ENCODE measurements at regions of chr4 and their contacts with region 1.

Region 1: GRCh38 chr4:7802093-7802726 is 137.5 kb downstream of the AFAP1 start:
- DNase-seq: peak; percentile 86
- H3K4me3 Mint-ChIP-seq: no peak overlapping the region
- H3K27ac Mint-ChIP-seq: no peak overlapping the region
- H3K4me1 Mint-ChIP-seq: peaks cover 11% of the 10 kb centered on the region
- H3K27me3 Mint-ChIP-seq: no peaks in the 10 kb centered on the region

Region 2: GRCh38 chr4:7607156-7607910 is 194.9 kb before region 1 on chr4:
- CTCF ChIA-PET with region 1: no interaction called
- POLR2A ChIA-PET with region 1: no interaction called
- DNase-seq: no peak
- H3K4me3 Mint-ChIP-seq: no peak overlapping the region
- H3K27ac Mint-ChIP-seq: no peak overlapping the region
- H3K4me1 Mint-ChIP-seq: no peaks in the 10 kb centered on the region
- H3K27me3 Mint-ChIP-seq: no peaks in the 10 kb centered on the region

Region 3: DNA sequence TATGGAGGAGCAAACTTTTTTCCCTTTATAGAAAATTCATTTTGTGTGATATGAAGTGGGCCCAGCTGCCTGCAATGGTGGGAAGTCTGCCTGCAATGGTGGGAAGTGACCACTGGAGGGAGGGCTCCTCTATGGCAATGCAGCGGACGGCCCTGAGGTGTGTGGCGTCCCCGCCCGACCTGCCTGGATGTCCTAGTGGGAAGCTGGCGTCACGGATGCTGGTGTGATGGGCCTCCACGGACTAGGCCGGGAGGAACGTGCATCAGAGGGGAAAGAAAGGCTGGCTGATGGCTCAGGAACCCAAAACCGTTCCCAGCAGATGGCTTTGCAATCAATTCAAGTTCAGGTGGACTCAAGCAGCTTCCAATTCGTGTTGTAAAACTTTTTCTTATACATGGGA is 40.5 kb before region 1 on chr4:
- CTCF ChIA-PET with region 1: interaction called, 21 read pairs
- POLR2A ChIA-PET with region 1: interaction called, 4 read pairs
- DNase-seq: peak; percentile 52
- H3K4me3 Mint-ChIP-seq: no peak overlapping the region
- H3K27ac Mint-ChIP-seq: peak overlapping the region; percentile 65
- H3K4me1 Mint-ChIP-seq: peaks cover 36% of the 10 kb centered on the region
- H3K27me3 Mint-ChIP-seq: no peaks in the 10 kb centered on the region

Region 4: GRCh38 chr4:7770224-7771050 is 31.8 kb before region 1 on chr4:
- CTCF ChIA-PET with region 1: interaction called, 21 read pairs
- POLR2A ChIA-PET with region 1: no interaction called
- DNase-seq: peak; percentile 53
- H3K4me3 Mint-ChIP-seq: peak overlapping the region; percentile 25
- H3K27ac Mint-ChIP-seq: peak overlapping the region; percentile 58
- H3K4me1 Mint-ChIP-seq: peaks cover 25% of the 10 kb centered on the region
- H3K27me3 Mint-ChIP-seq: no peaks in the 10 kb centered on the region

Region 5: DNA sequence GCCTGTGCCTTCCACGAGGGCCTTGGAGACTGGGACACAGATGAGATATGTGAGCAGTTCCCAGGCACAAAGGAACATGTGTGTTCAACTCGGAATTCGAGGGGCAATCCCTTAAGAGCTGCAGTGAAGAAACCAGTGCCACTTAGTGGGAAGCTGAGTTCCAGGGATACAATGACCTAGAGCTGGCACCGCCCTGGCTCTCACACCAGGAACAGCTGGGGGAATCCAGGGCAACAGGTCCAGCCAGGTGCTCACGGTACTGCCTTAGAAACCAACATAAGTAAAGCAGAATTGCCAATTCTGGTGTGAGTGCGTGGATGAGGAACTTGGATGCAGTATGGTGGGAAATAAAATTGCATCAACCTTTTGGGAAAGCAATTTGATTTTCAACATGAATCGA is 14.6 kb after region 1 on chr4:
- CTCF ChIA-PET with region 1: interaction called, 10 read pairs
- POLR2A ChIA-PET with region 1: no interaction called
- DNase-seq: no peak
- H3K4me3 Mint-ChIP-seq: no peak overlapping the region
- H3K27ac Mint-ChIP-seq: no peak overlapping the region
- H3K4me1 Mint-ChIP-seq: peaks cover 15% of the 10 kb centered on the region
- H3K27me3 Mint-ChIP-seq: no peaks in the 10 kb centered on the region

Region 6: GRCh38 chr4:7843831-7844593 is 41.8 kb after region 1 on chr4:
- CTCF ChIA-PET with region 1: interaction called, 49 read pairs
- POLR2A ChIA-PET with region 1: no interaction called
- DNase-seq: peak; percentile 71
- H3K4me3 Mint-ChIP-seq: no peak overlapping the region
- H3K27ac Mint-ChIP-seq: peak overlapping the region; percentile 13
- H3K4me1 Mint-ChIP-seq: peaks cover 20% of the 10 kb centered on the region
- H3K27me3 Mint-ChIP-seq: no peaks in the 10 kb centered on the region

Region 7: DNA sequence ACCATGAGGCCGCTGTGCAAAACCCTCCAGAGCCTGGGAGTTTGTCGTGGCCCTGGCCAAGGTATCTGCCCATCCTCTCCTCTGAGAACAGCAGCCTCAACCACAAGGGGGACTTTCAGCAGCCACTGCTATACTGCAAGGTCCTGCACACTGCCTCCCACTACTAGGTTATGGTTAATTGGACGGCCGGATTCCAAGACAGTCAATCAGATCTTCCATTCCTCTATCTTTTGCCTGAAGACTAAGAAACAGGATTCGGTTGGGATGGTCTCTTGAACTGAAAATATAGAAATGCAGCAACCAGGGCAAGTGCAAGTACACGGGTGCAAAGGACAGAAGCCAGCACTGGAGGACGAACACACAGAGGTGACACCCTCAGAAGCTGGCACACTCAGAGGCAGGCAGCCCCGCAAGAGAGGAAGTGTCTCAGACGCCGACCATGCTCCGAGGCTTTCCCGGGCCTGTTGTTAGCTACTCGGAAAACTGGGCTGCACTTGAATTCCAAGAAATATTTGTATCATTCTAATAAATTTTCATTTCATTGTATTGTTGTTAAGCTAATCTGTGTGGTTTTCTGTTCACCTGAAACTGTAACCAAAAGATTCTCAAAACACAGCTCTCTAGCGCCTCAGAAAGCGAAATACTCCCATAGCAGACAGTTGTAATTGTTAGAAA is 74.1 kb after region 1 on chr4:
- CTCF ChIA-PET with region 1: interaction called, 42 read pairs
- POLR2A ChIA-PET with region 1: interaction called, 4 read pairs
- DNase-seq: peak; percentile 59
- H3K4me3 Mint-ChIP-seq: peak overlapping the region; percentile 36
- H3K27ac Mint-ChIP-seq: peak overlapping the region; percentile 67
- H3K4me1 Mint-ChIP-seq: peaks cover 38% of the 10 kb centered on the region
- H3K27me3 Mint-ChIP-seq: no peaks in the 10 kb centered on the region

Region 8: DNA sequence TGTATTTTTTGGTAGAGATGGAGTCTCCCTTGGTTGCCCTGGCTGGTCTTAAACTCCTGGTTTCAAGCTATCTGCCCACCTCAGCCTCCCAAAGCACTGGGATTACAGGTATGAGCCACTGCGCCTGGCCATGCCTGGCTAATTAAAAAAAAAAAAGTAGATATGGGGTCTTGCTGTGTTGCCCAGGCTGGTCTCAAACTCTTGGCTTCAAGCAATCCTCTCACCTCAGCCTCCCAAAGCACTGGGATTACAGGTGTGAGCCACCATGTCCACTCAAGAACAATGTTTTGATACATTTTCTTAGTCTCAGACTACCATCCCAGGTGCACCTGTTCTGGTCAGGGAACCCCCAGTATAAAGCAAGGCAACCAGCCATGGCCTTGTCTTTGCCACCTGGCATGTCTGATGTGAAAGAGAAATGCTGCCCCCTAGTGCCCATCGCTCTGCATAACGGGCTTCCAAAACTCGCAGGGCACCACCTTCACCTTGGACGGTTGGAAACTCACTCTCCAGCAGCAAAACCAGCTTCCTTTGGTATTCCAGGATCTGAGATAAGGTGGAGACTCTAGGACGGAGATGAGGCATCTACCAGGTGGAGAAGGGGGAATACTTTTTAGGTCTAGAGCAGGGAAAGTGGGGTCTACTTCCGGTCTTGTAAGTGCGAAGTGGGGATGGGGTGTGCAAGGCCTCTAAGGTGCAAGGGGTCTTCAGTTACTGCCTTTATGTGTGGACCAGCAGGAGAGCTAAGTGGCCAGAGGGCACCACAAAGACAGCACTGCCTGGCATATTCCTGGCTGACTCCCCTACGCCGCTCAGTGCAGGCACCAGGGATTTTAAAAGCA is 185.2 kb after region 1 on chr4:
- CTCF ChIA-PET with region 1: interaction called, 56 read pairs
- POLR2A ChIA-PET with region 1: interaction called, 3 read pairs
- DNase-seq: peak; percentile 81
- H3K4me3 Mint-ChIP-seq: no peak overlapping the region
- H3K27ac Mint-ChIP-seq: no peak overlapping the region
- H3K4me1 Mint-ChIP-seq: peaks cover 2% of the 10 kb centered on the region
- H3K27me3 Mint-ChIP-seq: peaks cover 4% of the 10 kb centered on the region

Measured in activated CD4-positive, alpha-beta memory T cell treated with anti-CD3 and anti-CD28 coated beads, Interleukin-2, amount 10 ng/mL, durations not matched to agents 7 days and 5 days (primary cell).